CD8-positive, alpha-beta T cell (primary cell): ENCODE measurements at regions of chr6 and their contacts with region 1.

Region 1: GRCh38 chr6:7276199-7276524 is 36.8 kb downstream of the SSR1 start:
- DNase-seq: no peak
- ATAC-seq: no peak
- H3K4me3 ChIP-seq: no peak overlapping the region
- H3K4me3 Mint-ChIP-seq: no peak overlapping the region
- H3K27ac ChIP-seq: no peak overlapping the region
- H3K27ac Mint-ChIP-seq: no peak overlapping the region
- H3K4me1 ChIP-seq: no peaks in the 10 kb centered on the region
- H3K4me1 Mint-ChIP-seq: peaks cover 6% of the 10 kb centered on the region
- H3K27me3 ChIP-seq: no peaks in the 10 kb centered on the region
- H3K27me3 Mint-ChIP-seq: no peaks in the 10 kb centered on the region
- CTCF ChIP-seq: peak; percentile 37

Region 2: GRCh38 chr6:6724539-6725467 is 551.4 kb before region 1 on chr6:
- CTCF ChIA-PET with region 1: interaction called, 13 read pairs
- POLR2A ChIA-PET with region 1: no interaction called
- intact Hi-C with region 1: no loop called
- DNase-seq: peak; percentile 14 to 73 (median 52)
- ATAC-seq: peak; percentile 77
- H3K4me3 ChIP-seq: peak overlapping the region; percentile 29 to 38
- H3K4me3 Mint-ChIP-seq: peak overlapping the region; percentile 74
- H3K27ac ChIP-seq: no peak overlapping the region
- H3K27ac Mint-ChIP-seq: no peak overlapping the region
- H3K4me1 ChIP-seq: peaks cover 11% of the 10 kb centered on the region
- H3K4me1 Mint-ChIP-seq: peaks cover 6% of the 10 kb centered on the region
- H3K27me3 ChIP-seq: no peaks in the 10 kb centered on the region
- H3K27me3 Mint-ChIP-seq: peaks cover 8% of the 10 kb centered on the region
- CTCF ChIP-seq: peak; percentile 63

Region 3: DNA sequence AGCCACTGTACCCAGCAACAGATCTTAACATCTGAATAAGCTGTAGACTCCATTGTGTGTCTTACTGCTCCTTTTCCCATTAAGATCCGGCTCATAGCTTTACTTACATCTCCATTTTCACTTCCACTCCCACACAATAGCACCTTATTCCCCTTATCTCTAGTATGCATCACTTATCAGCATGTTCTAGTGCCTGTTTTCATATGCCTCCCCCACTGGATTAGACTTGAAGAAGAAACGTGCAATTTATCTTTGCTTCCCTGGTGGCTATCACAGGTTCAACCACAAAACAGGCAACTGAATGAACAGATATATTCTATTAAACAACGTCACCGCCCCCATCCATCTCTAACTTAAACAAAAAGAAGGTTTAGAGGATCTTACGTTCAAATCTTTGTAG is 24.8 kb after region 1 on chr6:
- CTCF ChIA-PET with region 1: interaction called, 17 read pairs
- POLR2A ChIA-PET with region 1: no interaction called
- intact Hi-C with region 1: no loop called
- DNase-seq: no peak
- ATAC-seq: no peak
- H3K4me3 ChIP-seq: no peak overlapping the region
- H3K4me3 Mint-ChIP-seq: no peak overlapping the region
- H3K27ac ChIP-seq: no peak overlapping the region
- H3K27ac Mint-ChIP-seq: no peak overlapping the region
- H3K4me1 ChIP-seq: no peaks in the 10 kb centered on the region
- H3K4me1 Mint-ChIP-seq: peaks cover 31% of the 10 kb centered on the region
- H3K27me3 ChIP-seq: no peaks in the 10 kb centered on the region
- H3K27me3 Mint-ChIP-seq: no peaks in the 10 kb centered on the region
- CTCF ChIP-seq: no peak

Region 4: DNA sequence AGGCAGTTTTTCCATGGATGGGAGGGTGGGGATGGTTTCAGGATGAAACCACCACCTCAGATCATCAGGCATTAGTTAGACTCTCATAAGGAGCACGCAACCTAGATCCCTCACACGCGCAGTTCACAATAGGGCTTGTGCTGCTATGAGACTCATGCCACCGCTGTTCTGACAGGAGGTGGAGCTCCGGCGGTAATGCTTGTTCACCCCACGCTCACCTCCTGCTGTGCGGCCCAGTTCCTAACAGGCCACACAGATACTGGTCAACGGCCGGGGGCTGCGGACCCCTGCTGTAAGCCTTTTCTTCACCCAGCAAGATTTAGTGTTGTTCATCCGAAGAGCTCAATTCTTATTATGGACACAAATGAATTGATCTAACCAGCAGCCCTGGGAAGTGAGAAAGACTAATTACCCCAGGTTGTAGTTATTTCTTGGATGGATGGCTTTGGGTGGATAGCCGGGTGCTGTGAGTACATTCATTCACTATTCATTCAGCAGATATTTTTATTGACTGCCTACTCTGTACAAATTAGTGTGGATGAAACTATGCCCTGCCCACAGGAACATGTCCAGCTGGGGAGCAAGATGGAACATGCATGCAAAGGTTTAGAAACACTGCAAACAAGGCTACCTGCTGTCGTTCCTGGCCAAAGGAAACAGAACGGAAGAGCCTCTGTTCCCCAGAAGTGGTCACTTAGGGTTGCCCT is 170.6 kb after region 1 on chr6:
- CTCF ChIA-PET with region 1: no interaction called
- POLR2A ChIA-PET with region 1: no interaction called
- intact Hi-C with region 1: no loop called
- DNase-seq: no peak
- ATAC-seq: no peak
- H3K4me3 ChIP-seq: no peak overlapping the region
- H3K4me3 Mint-ChIP-seq: no peak overlapping the region
- H3K27ac ChIP-seq: no peak overlapping the region
- H3K27ac Mint-ChIP-seq: no peak overlapping the region
- H3K4me1 ChIP-seq: no peaks in the 10 kb centered on the region
- H3K4me1 Mint-ChIP-seq: no peaks in the 10 kb centered on the region
- H3K27me3 ChIP-seq: no peaks in the 10 kb centered on the region
- H3K27me3 Mint-ChIP-seq: peaks cover 13% of the 10 kb centered on the region
- CTCF ChIP-seq: no peak

Region 5: DNA sequence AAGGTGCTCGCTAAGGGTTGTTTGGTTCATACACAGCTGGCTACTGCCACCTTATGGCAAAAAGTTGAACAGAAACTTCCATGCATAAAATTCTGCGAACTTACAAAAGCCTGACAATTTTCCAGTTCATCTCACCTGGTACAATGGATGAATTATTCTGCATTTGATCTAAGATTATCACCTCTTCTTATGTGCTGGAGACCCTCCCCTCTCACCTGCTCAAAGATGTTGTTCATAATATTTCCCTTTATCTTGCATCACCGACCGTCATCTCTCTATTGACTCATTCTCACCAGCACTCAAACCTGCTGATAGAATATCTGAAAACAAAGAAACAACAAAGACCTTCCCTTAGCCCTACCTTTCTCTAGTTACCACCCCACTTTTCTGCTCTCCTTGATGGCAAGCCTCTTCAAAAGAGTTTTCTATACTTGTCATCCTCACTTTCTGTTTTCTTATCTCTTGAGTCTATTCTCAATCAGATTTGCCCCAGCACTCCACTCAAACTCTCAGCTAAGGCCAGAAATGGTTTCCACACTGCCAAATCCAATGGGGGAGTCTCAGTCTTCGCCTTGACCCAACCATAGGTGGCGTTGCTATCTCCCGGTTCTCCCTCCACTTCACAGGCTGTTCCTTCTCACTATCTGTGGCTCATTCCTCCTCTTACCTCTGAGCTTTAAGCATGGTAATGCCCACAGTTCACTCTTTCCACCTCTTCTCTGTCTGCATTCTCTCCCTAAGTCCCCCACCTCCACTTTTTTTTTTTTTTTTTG is 339.6 kb after region 1 on chr6:
- CTCF ChIA-PET with region 1: interaction called, 186 read pairs
- POLR2A ChIA-PET with region 1: no interaction called
- intact Hi-C with region 1: loop called (anchors 1 kb)
- DNase-seq: peak in 5 of 9 experiments; percentile 25 to 65 (median 32)
- ATAC-seq: peak; percentile 52
- H3K4me3 ChIP-seq: no peak overlapping the region
- H3K4me3 Mint-ChIP-seq: peak overlapping the region; percentile 8
- H3K27ac ChIP-seq: no peak overlapping the region
- H3K27ac Mint-ChIP-seq: peak overlapping the region; percentile 0
- H3K4me1 ChIP-seq: peaks cover 7% of the 10 kb centered on the region
- H3K4me1 Mint-ChIP-seq: peaks cover 11% of the 10 kb centered on the region
- H3K27me3 ChIP-seq: no peaks in the 10 kb centered on the region
- H3K27me3 Mint-ChIP-seq: peaks cover 2% of the 10 kb centered on the region
- CTCF ChIP-seq: peak; percentile 85

Region 6: GRCh38 chr6:8063761-8064637 is 787.8 kb after region 1 on chr6 and contains the start of gene BLOC1S5:
- CTCF ChIA-PET with region 1: interaction called, 5 read pairs
- POLR2A ChIA-PET with region 1: no interaction called
- intact Hi-C with region 1: loop called in 1 of 2 experiments (anchors 2 kb)
- DNase-seq: peak; percentile 91 to 98 (median 95)
- ATAC-seq: peak; percentile 92
- H3K4me3 ChIP-seq: peak within 1 kb of the TSS; percentile 82 to 89
- H3K4me3 Mint-ChIP-seq: peak within 1 kb of the TSS; percentile 95
- H3K27ac ChIP-seq: peak within 1 kb of the TSS; percentile 84 to 87
- H3K27ac Mint-ChIP-seq: peak within 1 kb of the TSS; percentile 98
- H3K4me1 ChIP-seq: peaks cover 13% of the 10 kb centered on the region
- H3K4me1 Mint-ChIP-seq: peaks cover 27% of the 10 kb centered on the region
- H3K27me3 ChIP-seq: no peaks in the 10 kb centered on the region
- H3K27me3 Mint-ChIP-seq: peaks cover 2% of the 10 kb centered on the region
- CTCF ChIP-seq: no peak
- total RNA-seq, gene BLOC1S5: 6.3 to 8.9 TPM